ENCODE measurements at regions of chr12 and their contacts with region 1.

Region 1: GRCh38 chr12:53267999-53268647 is at the start of gene ESPL1:
- DNase-seq: peak; percentile 85
- H3K4me3 Mint-ChIP-seq: peak within 1 kb of the TSS; percentile 99
- H3K27ac Mint-ChIP-seq: peak within 1 kb of the TSS; percentile 97
- H3K4me1 Mint-ChIP-seq: peaks cover 53% of the 10 kb centered on the region
- H3K27me3 Mint-ChIP-seq: no peaks in the 10 kb centered on the region
- total RNA-seq, gene ESPL1: 107 to 125 TPM

Region 2: DNA sequence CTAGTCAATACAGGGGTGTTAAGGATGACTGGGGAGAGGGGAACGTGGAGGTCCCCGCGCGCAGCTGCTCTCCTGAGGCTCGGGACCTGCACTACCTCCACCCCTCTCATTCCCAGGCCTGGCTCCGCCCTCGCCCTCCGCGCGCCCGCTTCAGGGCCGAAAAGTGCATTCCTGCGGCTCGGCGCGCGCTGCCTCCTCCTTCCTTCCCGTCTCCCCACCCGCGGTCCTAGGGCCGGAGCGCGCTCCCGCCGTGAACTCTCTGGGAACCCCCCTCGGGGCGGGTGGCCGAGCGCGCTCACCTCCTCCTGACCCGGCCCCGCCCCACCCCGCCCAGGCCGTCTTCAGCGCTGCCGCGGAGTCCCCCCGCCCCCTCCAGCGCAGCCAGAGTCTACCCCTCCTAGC is 47.3 kb before region 1 on chr12:
- CTCF ChIA-PET with region 1: interaction called, 117 read pairs
- POLR2A ChIA-PET with region 1: interaction called, 3 read pairs
- DNase-seq: peak; percentile 85
- H3K4me3 Mint-ChIP-seq: peak overlapping the region; percentile 98
- H3K27ac Mint-ChIP-seq: peak overlapping the region; percentile 92
- H3K4me1 Mint-ChIP-seq: peaks cover 74% of the 10 kb centered on the region
- H3K27me3 Mint-ChIP-seq: no peaks in the 10 kb centered on the region

Region 3: DNA sequence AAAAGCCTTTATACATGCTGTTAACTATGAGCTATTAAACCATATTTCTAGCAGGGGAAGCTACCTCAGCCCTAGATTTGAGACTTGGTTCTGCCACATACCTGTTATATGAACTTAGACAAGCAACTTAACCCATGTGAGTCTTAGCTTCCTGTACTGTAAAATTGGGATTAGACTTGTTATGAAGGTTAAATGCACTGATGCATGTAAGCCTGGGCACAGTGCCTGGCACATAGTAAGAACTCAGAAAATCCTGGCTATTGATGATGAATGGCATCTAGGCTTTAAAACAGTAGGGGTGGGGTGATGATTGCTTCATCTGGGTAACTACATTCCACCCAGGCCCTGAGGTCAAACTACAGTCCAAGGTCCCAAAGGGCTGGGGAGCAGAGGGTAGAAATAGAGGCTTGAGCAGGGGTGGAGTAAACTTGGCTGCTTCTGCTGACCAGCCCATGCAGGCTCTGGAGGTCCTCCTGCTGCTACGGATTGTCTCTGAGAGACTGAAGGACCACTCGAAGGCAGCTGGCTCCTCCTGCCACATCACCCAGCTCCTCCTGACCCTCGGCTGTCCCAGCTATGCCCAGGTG is 11.3 kb after region 1 on chr12:
- CTCF ChIA-PET with region 1: interaction called, 10 read pairs
- POLR2A ChIA-PET with region 1: interaction called, 3 read pairs
- DNase-seq: no peak
- H3K4me3 Mint-ChIP-seq: no peak overlapping the region
- H3K27ac Mint-ChIP-seq: no peak overlapping the region
- H3K4me1 Mint-ChIP-seq: peaks cover 5% of the 10 kb centered on the region
- H3K27me3 Mint-ChIP-seq: no peaks in the 10 kb centered on the region

Region 4: GRCh38 chr12:53287741-53288216 is 19.7 kb after region 1 on chr12:
- CTCF ChIA-PET with region 1: interaction called, 21 read pairs
- POLR2A ChIA-PET with region 1: interaction called, 3 read pairs
- DNase-seq: peak; percentile 76
- H3K4me3 Mint-ChIP-seq: no peak overlapping the region
- H3K27ac Mint-ChIP-seq: peak overlapping the region; percentile 64
- H3K4me1 Mint-ChIP-seq: peaks cover 9% of the 10 kb centered on the region
- H3K27me3 Mint-ChIP-seq: no peaks in the 10 kb centered on the region